Tibial artery (tissue), 4 donors: ENCODE measurements at regions of chr15 and their contacts with region 1.

Region 1: GRCh38 chr15:71559098-71559497 is 251.3 kb upstream of the NR2E3 start:
- DNase-seq: no peak
- H3K4me3 ChIP-seq: no peak overlapping the region
- H3K27ac ChIP-seq: no peak overlapping the region
- H3K4me1 ChIP-seq: no peaks in the 10 kb centered on the region
- H3K27me3 ChIP-seq: no peaks in the 10 kb centered on the region
- CTCF ChIP-seq: no peak

Region 2: DNA sequence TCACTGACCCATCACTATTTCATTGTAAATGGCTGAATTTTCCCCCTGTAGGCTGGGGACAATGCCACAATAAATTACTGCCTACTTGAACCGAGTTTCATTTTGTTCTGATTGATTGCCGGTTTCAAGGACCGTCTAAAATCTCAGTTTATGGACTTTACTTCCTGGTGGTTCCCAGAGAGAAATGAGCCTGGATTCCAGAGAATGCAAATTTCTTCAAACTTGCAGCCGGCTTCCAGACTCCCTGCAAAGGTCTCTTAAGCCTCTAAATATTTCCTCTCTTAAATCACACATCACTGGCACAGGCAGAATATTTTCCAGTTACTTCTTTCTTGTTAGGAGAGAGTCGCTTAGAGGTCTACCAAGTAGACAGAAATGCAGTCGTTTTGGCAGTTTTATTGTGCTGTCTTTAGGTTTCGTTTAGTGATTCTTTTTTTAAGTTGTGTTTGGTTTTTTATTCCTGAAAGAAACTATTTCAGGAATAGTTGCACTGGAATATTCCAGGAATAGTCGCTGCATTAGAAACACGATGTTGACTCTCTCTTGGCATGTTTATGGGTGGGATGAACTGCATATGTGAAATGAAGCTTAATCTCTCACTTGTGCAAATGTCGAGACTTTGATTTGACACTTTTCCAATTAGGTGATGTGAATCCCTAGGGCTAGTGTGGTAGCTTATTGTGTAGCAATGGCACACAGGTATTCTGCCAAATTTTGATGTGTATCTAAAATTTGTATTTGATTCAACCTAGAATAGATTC is 32.9 kb before region 1 on chr15:
- intact Hi-C with region 1: loop called (anchors 2 kb)
- DNase-seq: no peak
- H3K4me3 ChIP-seq: peak overlapping the region in 1 of 2 donors; percentile 22
- H3K27ac ChIP-seq: peak overlapping the region; percentile 10 to 17
- H3K4me1 ChIP-seq: peaks cover 0 to 16% (median 0%) of the 10 kb centered on the region in 4 donors
- H3K27me3 ChIP-seq: no peaks in the 10 kb centered on the region
- CTCF ChIP-seq: no peak